GM13977 (cell line): ENCODE measurements at regions of chr2 and their contacts with region 1.

Region 1: GRCh38 chr2:235135990-235136561 is 184.3 kb downstream of the SH3BP4 start:
- DNase-seq: peak; percentile 52
- CTCF ChIP-seq: peak; percentile 59

Region 2: GRCh38 chr2:234496835-234497591 is 639.1 kb before region 1 on chr2 and contains the start of gene ARL4C:
- in situ Hi-C with region 1: no loop called
- DNase-seq: peak; percentile 88
- CTCF ChIP-seq: no peak

Region 3: GRCh38 chr2:235595422-235596010 is 459.4 kb after region 1 on chr2:
- in situ Hi-C with region 1: loop called (anchors 25 kb)
- DNase-seq: peak; percentile 66
- CTCF ChIP-seq: peak; percentile 69